Mammary epithelial cell (primary cell): ENCODE measurements at regions of chr11 and their contacts with region 1.

Region 1: DNA sequence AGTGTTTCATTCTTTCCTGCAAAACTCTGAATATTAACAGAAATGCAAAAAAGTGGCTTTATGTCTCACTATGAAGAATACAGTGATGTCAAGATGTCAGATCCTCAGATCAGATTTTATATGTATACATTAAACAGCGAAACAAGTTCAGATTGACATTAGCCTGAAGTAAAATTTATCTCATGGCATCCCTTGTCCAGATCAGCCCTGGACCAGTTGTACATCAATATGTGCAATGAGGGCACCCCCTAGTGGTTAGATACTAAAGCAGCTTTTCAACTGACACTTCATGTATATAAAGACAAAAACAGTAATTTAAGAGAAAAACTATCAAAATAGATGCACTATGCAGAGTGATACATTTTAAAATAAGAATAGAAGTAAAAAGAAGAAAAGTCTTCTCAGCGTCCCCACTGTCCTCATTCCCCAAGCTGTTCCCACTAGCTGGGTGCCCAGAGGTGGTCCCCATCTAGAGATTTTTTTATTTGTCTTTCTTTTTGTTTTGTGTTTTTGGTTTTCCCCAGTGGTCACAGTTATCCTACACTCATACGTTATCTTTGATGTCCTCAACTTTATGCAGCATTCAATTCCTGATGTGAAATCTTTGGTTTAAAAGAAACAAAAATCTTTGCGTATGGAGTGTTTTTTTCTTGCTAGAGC is 2193.4 kb upstream of the RAG2 start:
- DNase-seq: peak; percentile 39
- H3K4me3 ChIP-seq: no peak overlapping the region
- H3K27ac ChIP-seq: no peak overlapping the region
- H3K4me1 ChIP-seq: no peaks in the 10 kb centered on the region
- H3K27me3 ChIP-seq: no peaks in the 10 kb centered on the region
- CTCF ChIP-seq: peak; percentile 73 to 74

Region 2: GRCh38 chr11:37002831-37003230 is 1788.6 kb before region 1 on chr11:
- CTCF ChIA-PET with region 1: no interaction called
- dilution Hi-C with region 1: no loop called
- in situ Hi-C with region 1: no loop called
- intact Hi-C with region 1: loop called (anchors 5 kb)
- DNase-seq: no peak
- H3K4me3 ChIP-seq: no peak overlapping the region
- H3K27ac ChIP-seq: no peak overlapping the region
- H3K4me1 ChIP-seq: no peaks in the 10 kb centered on the region
- H3K27me3 ChIP-seq: no peaks in the 10 kb centered on the region
- CTCF ChIP-seq: no peak

Region 3: GRCh38 chr11:37525336-37525735 is 1266.1 kb before region 1 on chr11:
- CTCF ChIA-PET with region 1: no interaction called
- dilution Hi-C with region 1: no loop called
- in situ Hi-C with region 1: no loop called
- intact Hi-C with region 1: loop called (anchors 5 kb)
- DNase-seq: no peak
- H3K4me3 ChIP-seq: no peak overlapping the region
- H3K27ac ChIP-seq: no peak overlapping the region
- H3K4me1 ChIP-seq: no peaks in the 10 kb centered on the region
- H3K27me3 ChIP-seq: no peaks in the 10 kb centered on the region
- CTCF ChIP-seq: peak in 1 of 2 donors; percentile 50

Region 4: DNA sequence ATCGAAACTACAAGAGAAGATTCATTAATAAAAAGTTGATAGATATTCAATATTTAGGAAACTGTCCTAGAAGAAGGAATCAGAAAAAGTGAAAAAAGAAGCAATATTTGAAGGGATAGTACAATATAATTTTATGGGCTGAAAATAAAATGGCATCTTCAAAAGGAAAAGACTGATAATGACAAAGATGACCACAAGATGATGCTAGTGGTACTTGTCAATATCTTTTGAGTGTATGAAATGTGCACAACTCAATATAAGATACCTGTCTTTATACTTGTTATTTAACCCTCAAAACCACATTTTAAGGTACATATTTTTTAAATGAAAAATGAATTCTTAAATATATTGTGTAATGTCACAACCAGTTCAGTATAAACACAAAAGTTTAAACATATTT is 1133.8 kb before region 1 on chr11:
- CTCF ChIA-PET with region 1: no interaction called
- dilution Hi-C with region 1: no loop called
- in situ Hi-C with region 1: no loop called
- intact Hi-C with region 1: loop called (anchors 1 kb)
- DNase-seq: peak; percentile 29
- H3K4me3 ChIP-seq: no peak overlapping the region
- H3K27ac ChIP-seq: no peak overlapping the region
- H3K4me1 ChIP-seq: no peaks in the 10 kb centered on the region
- H3K27me3 ChIP-seq: no peaks in the 10 kb centered on the region
- CTCF ChIP-seq: peak; percentile 74 to 82

Region 5: DNA sequence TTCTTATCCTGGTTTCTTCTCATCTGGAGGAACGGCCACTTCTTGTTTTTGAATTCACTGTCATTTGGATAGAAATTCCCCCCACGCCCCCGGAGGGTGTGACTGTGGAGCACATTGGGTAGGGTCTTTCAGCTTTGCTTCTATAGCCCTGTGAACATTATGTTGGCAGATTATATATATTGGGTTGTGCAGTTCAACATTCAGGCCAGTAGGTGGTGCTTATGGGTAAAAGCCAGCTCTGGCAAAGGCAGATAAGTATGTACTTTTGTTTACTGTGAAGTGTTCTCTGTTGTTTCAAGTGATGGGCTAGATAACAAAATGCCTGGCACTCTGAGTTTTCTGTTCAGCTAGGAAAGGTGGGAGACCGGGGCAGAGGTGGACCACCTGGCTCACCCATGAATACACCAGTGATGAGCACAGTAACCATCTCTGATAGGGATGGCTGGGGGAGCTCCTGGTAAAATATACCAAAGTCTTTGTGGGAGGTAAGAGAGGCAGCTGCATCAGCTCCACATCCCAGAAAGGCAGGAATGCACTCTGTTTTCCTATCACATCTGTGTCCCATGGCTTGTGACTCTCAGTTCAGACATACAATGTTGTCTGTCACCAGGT is 845.2 kb before region 1 on chr11:
- CTCF ChIA-PET with region 1: no interaction called
- dilution Hi-C with region 1: no loop called
- in situ Hi-C with region 1: no loop called
- intact Hi-C with region 1: loop called (anchors 1 kb)
- DNase-seq: peak; percentile 43
- H3K4me3 ChIP-seq: no peak overlapping the region
- H3K27ac ChIP-seq: no peak overlapping the region
- H3K4me1 ChIP-seq: no peaks in the 10 kb centered on the region
- H3K27me3 ChIP-seq: no peaks in the 10 kb centered on the region
- CTCF ChIP-seq: peak; percentile 81 to 83

Region 6: GRCh38 chr11:40293655-40294348 is 1502.4 kb after region 1 on chr11:
- CTCF ChIA-PET with region 1: no interaction called
- dilution Hi-C with region 1: no loop called
- in situ Hi-C with region 1: no loop called
- intact Hi-C with region 1: loop called (anchors 10 kb)
- DNase-seq: peak; percentile 72
- H3K4me3 ChIP-seq: peak overlapping the region; percentile 37 to 59 (median 59)
- H3K27ac ChIP-seq: no peak overlapping the region
- H3K4me1 ChIP-seq: peaks cover 2% of the 10 kb centered on the region
- H3K27me3 ChIP-seq: peaks cover 1% of the 10 kb centered on the region
- CTCF ChIP-seq: peak; percentile 90 to 91